ENCODE measurements at regions of chr3 and their contacts with region 1.

Region 1: DNA sequence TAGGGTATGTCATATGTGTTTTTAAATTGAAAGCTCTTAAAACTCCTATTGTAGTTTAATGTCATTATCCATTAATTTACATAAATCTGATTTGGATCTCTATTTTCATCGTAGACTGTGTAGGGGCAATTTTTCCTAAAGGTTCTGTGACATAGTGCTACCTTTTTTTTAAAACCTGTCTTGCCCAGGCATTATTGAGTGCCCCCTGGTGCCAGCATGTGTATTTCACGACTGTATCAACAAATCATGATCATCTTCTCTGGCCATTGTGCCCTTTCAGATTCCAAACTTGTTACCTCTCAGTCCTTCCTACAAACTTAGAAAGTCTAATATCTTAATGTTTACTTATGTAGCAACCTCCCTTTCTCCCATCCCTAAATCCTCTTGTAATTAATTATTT is 97.2 kb upstream of the FLNB start:
- DNase-seq: no peak
- H3K4me3 ChIP-seq: no peak overlapping the region
- H3K27me3 ChIP-seq: no peaks in the 10 kb centered on the region
- CTCF ChIP-seq: peak; percentile 29

Region 2: GRCh38 chr3:57597122-57597923 is 313.7 kb before region 1 on chr3 and contains the start of gene ARF4:
- CTCF ChIA-PET with region 1: no interaction called
- POLR2A ChIA-PET with region 1: interaction called, 17 read pairs
- DNase-seq: peak; percentile 98
- H3K4me3 ChIP-seq: peak within 1 kb of the TSS; percentile 95
- H3K27me3 ChIP-seq: no peaks in the 10 kb centered on the region
- CTCF ChIP-seq: peak; percentile 38
- polyA plus RNA-seq, gene ARF4: 476 and 810 TPM in 2 replicates